ENCODE measurements at regions of chr15 and their contacts with region 1.

Region 1: GRCh38 chr15:47987908-47988532 is 132.8 kb upstream of the SLC24A5 start:
- DNase-seq: no peak
- H3K4me3 ChIP-seq: no peak overlapping the region
- H3K27ac ChIP-seq: no peak overlapping the region
- H3K4me1 ChIP-seq: no peaks in the 10 kb centered on the region
- H3K27me3 ChIP-seq: no peaks in the 10 kb centered on the region
- CTCF ChIP-seq: peak in 2 of 3 experiments; percentile 54 to 69; a peak in 3 of 4 replicates
- EP300 ChIP-seq: no peak
- POLR2A ChIP-seq: no peak
- RAD21 ChIP-seq: peak; percentile 93

Region 2: DNA sequence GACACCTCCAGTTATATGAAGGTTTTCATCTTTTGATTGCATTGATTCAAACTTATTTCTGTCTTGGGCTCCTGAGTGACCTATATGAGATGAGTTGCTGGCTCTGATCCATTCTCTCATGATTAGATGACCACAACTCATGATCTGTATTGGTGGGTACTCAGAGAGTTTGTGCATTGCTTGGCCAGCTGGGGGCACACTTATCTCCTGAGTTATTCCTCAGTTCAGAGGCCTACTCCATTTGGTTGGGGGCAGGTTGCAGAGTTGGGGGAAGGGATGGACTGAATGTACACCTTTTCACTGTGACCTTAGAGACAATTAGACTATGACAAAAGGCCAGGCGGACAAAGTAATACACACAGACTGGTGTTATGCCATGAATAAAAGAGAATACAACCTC is 436.9 kb before region 1 on chr15:
- CTCF ChIA-PET with region 1: interaction called, 19 read pairs
- POLR2A ChIA-PET with region 1: no interaction called
- DNase-seq: peak in 1 of 2 experiments; percentile 53
- H3K4me3 ChIP-seq: no peak overlapping the region
- H3K27ac ChIP-seq: no peak overlapping the region
- H3K4me1 ChIP-seq: no peaks in the 10 kb centered on the region
- H3K27me3 ChIP-seq: no peaks in the 10 kb centered on the region
- CTCF ChIP-seq: peak; percentile 21 to 60 (median 49)
- EP300 ChIP-seq: no peak
- POLR2A ChIP-seq: no peak
- RAD21 ChIP-seq: peak; percentile 70 to 76

Region 3: GRCh38 chr15:47717036-47717611 is 270.9 kb before region 1 on chr15 and contains the start of gene SEMA6D:
- CTCF ChIA-PET with region 1: interaction called, 38 read pairs
- POLR2A ChIA-PET with region 1: no interaction called
- DNase-seq: peak; percentile 31 to 79
- H3K4me3 ChIP-seq: peak within 1 kb of the TSS; percentile 72 to 84 (median 78)
- H3K27ac ChIP-seq: no peak within 1 kb of the TSS
- H3K4me1 ChIP-seq: peaks cover 1 to 7% (median 4%) of the 10 kb centered on the region in 4 experiments; a peak in 3 of 7 replicates
- H3K27me3 ChIP-seq: peaks cover 0 to 23% (median 17%) of the 10 kb centered on the region in 4 experiments; a peak in 6 of 7 replicates
- CTCF ChIP-seq: peak in 2 of 3 experiments; percentile 39 to 49; a peak in 3 of 4 replicates
- EP300 ChIP-seq: no peak
- POLR2A ChIP-seq: no peak
- RAD21 ChIP-seq: peak in 1 of 2 experiments; percentile 21; a peak in 2 of 4 replicates
- total RNA-seq, gene SEMA6D: 2.2 and 3.7 TPM in 2 replicates

Region 4: GRCh38 chr15:47944637-47945288 is 43.3 kb before region 1 on chr15:
- CTCF ChIA-PET with region 1: interaction called, 12 read pairs
- POLR2A ChIA-PET with region 1: no interaction called
- DNase-seq: no peak
- H3K4me3 ChIP-seq: no peak overlapping the region
- H3K27ac ChIP-seq: no peak overlapping the region
- H3K4me1 ChIP-seq: peaks cover 0 to 3% (median 0%) of the 10 kb centered on the region in 4 experiments; a peak in 1 of 7 replicates
- H3K27me3 ChIP-seq: no peaks in the 10 kb centered on the region
- CTCF ChIP-seq: no peak
- EP300 ChIP-seq: no peak
- POLR2A ChIP-seq: no peak
- RAD21 ChIP-seq: no peak

Region 5: GRCh38 chr15:48001393-48002039 is 13.5 kb after region 1 on chr15:
- CTCF ChIA-PET with region 1: interaction called, 18 read pairs
- POLR2A ChIA-PET with region 1: no interaction called
- DNase-seq: no peak
- H3K4me3 ChIP-seq: no peak overlapping the region
- H3K27ac ChIP-seq: no peak overlapping the region
- H3K4me1 ChIP-seq: peaks cover 0 to 6% (median 2%) of the 10 kb centered on the region in 4 experiments; a peak in 3 of 7 replicates
- H3K27me3 ChIP-seq: no peaks in the 10 kb centered on the region
- CTCF ChIP-seq: no peak
- EP300 ChIP-seq: no peak
- POLR2A ChIP-seq: no peak
- RAD21 ChIP-seq: no peak

Region 6: GRCh38 chr15:48352474-48353072 is 364.6 kb after region 1 on chr15:
- CTCF ChIA-PET with region 1: no interaction called
- POLR2A ChIA-PET with region 1: no interaction called
- DNase-seq: peak in 1 of 2 experiments; percentile 19
- H3K4me3 ChIP-seq: no peak overlapping the region
- H3K27ac ChIP-seq: no peak overlapping the region
- H3K4me1 ChIP-seq: peaks cover 0 to 5% (median 1%) of the 10 kb centered on the region in 4 experiments; a peak in 2 of 7 replicates
- H3K27me3 ChIP-seq: no peaks in the 10 kb centered on the region
- CTCF ChIP-seq: peak in 2 of 3 experiments; percentile 77 to 80; a peak in 3 of 4 replicates
- EP300 ChIP-seq: no peak
- POLR2A ChIP-seq: no peak
- RAD21 ChIP-seq: peak; percentile 81 to 89

Measured in H1 (cell line).